ENCODE measurements at regions of chr17 and their contacts with region 1.

Region 1: GRCh38 chr17:29032857-29033197 is 10.1 kb upstream of the PIPOX start:
- DNase-seq: no peak
- H3K4me3 ChIP-seq: peak overlapping the region in 2 of 4 experiments; percentile 32 to 47; a peak in 3 of 8 replicates
- H3K27ac ChIP-seq: peak overlapping the region; percentile 72; the same call in 1 of the 2 replicates
- H3K4me1 ChIP-seq: peaks cover 11 to 31% (median 22%) of the 10 kb centered on the region in 4 experiments
- H3K27me3 ChIP-seq: no peaks in the 10 kb centered on the region
- CTCF ChIP-seq: no peak
- EP300 ChIP-seq: peak in 1 of 2 experiments; percentile 64; a peak in 1 of 3 replicates
- POLR2A ChIP-seq: no peak; a peak in 1 of 3 replicates
- RAD21 ChIP-seq: no peak

Region 2: DNA sequence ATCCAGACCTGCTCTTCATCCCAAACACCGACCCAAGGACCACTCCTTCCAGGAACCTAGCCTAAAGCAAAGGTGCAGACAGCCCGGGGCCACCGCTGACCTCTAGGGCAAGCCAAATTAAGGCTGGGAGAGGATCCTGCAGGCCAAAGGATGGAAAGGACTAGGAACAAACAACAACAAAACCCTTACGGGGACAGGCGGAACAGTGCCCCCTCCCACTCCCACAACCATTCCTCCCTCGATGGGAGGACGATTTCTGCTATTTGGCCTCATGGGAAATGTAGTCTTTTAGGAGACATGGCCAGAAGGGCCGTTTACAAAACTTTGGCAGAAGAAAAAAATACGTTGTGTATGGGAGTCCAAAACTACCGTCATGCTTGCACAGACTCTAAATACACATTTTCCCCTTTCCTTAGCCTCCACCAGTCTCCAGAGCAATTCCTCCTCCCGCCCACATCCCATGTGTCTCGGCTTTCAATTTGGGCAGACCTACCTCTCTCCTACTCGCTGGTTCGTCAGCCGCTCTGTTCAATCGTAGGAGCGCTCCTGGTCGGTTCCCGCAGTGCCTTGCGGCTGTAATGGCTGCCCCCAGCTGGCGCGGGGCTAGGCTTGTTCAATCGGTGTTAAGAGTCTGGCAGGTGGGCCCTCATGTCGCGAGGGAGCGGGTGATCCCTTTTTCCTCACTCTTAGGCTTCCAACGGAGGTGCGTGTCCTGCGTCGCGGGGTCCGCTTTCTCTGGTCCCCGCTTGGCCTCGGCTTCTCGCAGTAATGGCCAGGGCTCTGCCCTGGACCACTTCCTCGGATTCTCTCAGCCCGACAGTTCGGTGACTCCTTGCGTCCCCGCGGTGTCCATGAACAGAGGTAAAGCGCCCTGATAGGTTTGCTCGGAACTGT is 178.1 kb before region 1 on chr17 and contains the start of gene ERAL1:
- CTCF ChIA-PET with region 1: no interaction called
- POLR2A ChIA-PET with region 1: no interaction called
- DNase-seq: peak in 1 of 2 experiments; percentile 90
- H3K4me3 ChIP-seq: peak within 1 kb of the TSS; percentile 78 to 96 (median 93)
- H3K27ac ChIP-seq: peak within 1 kb of the TSS; percentile 75; the same call in 1 of the 2 replicates
- H3K4me1 ChIP-seq: no peaks in the 10 kb centered on the region; a peak in 2 of 7 replicates
- H3K27me3 ChIP-seq: no peaks in the 10 kb centered on the region
- CTCF ChIP-seq: no peak
- EP300 ChIP-seq: no peak
- POLR2A ChIP-seq: peak; percentile 82 to 93
- RAD21 ChIP-seq: no peak
- total RNA-seq, gene ERAL1: 67.8 and 77.1 TPM in 2 replicates

Region 3: DNA sequence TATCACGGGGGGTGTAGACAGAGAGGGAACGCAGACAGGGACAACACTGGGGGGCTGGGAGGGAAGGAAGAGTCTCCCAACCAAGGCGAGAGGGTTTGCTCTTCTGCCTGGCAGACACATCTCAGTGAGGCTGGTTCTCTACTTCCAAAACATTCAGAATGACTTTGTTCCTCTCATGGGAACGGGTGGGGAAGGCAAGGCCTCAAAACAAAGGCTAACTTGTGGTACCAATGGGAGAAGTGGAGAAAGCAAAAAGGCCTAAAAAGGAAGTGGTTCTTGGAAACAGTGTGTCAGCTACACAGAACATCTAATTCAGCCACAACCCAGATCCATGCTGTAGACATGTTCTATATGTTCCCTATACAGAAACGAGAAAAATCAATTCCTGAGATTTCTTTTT is 142.8 kb before region 1 on chr17:
- CTCF ChIA-PET with region 1: no interaction called
- POLR2A ChIA-PET with region 1: no interaction called
- DNase-seq: no peak
- H3K4me3 ChIP-seq: no peak overlapping the region
- H3K27ac ChIP-seq: no peak overlapping the region
- H3K4me1 ChIP-seq: peaks cover 0 to 3% (median under 1%) of the 10 kb centered on the region in 4 experiments; a peak in 2 of 7 replicates
- H3K27me3 ChIP-seq: no peaks in the 10 kb centered on the region
- CTCF ChIP-seq: no peak
- EP300 ChIP-seq: no peak
- POLR2A ChIP-seq: no peak
- RAD21 ChIP-seq: no peak

Region 4: GRCh38 chr17:28937044-28937729 is 95.6 kb before region 1 on chr17:
- CTCF ChIA-PET with region 1: no interaction called
- POLR2A ChIA-PET with region 1: no interaction called
- DNase-seq: no peak
- H3K4me3 ChIP-seq: no peak overlapping the region
- H3K27ac ChIP-seq: no peak overlapping the region
- H3K4me1 ChIP-seq: peaks cover 2 to 22% (median 16%) of the 10 kb centered on the region in 4 experiments; a peak in 5 of 7 replicates
- H3K27me3 ChIP-seq: no peaks in the 10 kb centered on the region
- CTCF ChIP-seq: no peak
- EP300 ChIP-seq: no peak
- POLR2A ChIP-seq: no peak
- RAD21 ChIP-seq: no peak

Region 5: DNA sequence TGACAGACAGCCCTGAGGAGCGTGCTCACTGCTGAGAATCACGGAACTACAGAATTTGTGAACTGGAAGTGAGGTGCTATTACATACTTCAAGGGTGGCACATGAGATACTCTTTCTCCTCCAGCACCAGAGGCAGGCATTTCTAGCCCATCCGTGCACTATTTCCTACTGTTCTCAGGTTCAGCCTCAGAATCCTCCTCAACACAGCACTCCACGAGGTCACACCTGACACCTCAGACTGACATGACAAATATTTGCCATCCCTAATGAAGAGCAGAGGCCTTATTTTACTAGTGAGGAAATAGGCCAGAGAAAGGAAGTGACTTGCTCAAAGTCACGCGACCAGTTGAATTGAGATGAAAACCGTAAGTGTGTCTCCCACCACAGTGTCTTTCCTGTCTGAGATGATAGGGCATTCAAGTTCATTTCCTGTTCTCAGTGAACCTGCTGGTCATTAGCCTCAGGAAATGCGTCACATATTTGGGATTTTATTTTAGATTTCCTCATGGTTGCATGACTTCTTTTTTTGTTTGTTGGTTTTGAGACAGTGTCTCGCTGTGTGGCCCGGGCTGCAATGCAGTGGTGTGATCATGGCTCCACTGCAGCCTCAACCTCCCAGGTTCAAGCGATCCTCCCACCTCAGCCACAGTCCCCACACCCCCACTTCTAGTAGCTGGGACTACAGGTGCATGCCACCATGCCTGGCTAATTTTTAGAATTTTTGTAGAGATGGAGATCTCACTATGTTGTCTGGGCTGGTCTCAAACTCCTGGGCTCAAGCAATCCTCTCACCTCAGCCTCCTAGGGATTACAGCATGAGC is 50.5 kb before region 1 on chr17:
- CTCF ChIA-PET with region 1: no interaction called
- POLR2A ChIA-PET with region 1: interaction called, 14 read pairs
- DNase-seq: no peak
- H3K4me3 ChIP-seq: no peak overlapping the region
- H3K27ac ChIP-seq: no peak overlapping the region
- H3K4me1 ChIP-seq: peaks cover 14 to 18% (median 16%) of the 10 kb centered on the region in 4 experiments
- H3K27me3 ChIP-seq: no peaks in the 10 kb centered on the region
- CTCF ChIP-seq: no peak
- EP300 ChIP-seq: no peak
- POLR2A ChIP-seq: no peak
- RAD21 ChIP-seq: no peak

Region 6: DNA sequence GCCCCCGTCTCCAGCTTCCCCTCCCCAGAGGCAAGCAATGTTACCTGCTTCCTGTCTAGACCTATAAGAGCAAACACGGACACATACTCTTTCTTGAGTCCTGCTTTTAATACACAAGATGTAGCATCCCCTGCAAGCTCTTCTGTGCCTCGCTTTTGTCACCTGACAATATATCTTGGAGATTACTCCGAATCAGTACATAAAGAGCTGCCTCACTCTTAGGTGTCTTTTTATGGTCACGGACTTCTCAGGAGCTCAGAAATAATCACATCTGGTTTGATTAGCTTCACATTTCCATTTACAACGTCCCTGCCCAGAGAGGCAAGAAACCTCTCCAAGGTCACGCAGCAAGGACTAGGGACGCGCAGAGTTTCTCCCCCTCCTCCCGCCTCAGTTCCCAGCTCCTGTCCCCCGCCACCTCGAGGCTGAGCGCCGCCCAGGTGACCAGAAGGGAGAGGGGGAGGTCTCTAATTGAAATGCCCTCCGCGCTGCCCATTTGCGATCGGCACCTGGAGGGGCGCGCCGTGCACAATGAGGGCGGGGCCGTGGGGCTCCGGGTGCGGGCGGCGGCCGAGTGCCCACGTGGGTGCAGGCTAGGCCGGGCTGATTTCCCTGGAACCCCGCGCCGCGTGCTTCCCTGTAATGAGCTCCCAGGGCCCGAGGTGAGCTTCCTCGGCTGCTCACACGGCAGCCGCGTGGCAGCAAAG is 13.2 kb before region 1 on chr17:
- CTCF ChIA-PET with region 1: interaction called, 13 read pairs
- POLR2A ChIA-PET with region 1: interaction called, 47 read pairs
- DNase-seq: peak in 1 of 2 experiments; percentile 72
- H3K4me3 ChIP-seq: peak overlapping the region in 2 of 4 experiments; percentile 23 to 45; a peak in 4 of 8 replicates
- H3K27ac ChIP-seq: no peak overlapping the region
- H3K4me1 ChIP-seq: peaks cover 20 to 37% (median 32%) of the 10 kb centered on the region in 4 experiments
- H3K27me3 ChIP-seq: peaks cover 0 to 3% (median 0%) of the 10 kb centered on the region in 4 experiments; a peak in 3 of 7 replicates
- CTCF ChIP-seq: no peak
- EP300 ChIP-seq: no peak
- POLR2A ChIP-seq: no peak
- RAD21 ChIP-seq: no peak

Region 7: DNA sequence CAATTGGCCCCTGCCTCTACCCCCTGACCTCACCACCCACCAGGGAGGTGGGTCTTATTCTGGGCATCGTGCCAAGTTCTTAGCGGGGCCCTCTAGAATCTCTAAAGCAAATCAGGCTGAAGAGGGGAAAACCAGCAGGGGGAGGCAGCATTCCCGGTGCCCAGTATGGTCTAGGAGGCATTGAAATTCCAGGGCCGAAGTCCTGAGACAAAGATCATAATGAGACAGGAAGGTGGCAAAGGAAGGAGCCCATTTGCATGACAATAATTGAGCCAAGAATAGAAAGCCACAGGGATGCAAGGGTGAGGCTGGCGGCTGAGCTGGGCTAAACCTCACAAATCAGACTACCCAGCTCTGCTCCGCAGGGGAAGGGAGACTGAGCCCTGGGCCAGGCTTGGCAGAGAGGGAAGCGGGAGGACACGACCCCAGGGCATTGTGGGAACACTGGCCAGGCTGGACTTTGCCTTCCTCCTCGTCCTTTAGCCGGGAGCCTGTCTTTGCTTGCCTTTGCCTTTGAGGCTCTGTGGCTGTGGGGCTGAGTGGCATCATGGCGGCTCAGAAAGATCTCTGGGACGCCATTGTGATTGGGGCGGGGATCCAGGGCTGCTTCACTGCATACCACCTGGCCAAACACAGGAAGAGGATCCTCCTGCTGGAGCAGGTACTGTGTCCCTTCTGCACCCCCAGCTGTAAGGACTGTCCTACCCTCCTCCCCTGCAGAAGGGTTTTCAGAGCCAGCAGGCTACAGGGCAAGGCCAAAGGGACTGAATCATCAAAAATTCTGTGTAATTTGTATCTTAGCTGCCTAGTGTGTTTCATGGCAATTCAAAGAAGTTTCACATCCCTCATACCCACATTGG is 10.1 kb after region 1 on chr17 and contains the start of gene PIPOX:
- CTCF ChIA-PET with region 1: interaction called, 6 read pairs
- POLR2A ChIA-PET with region 1: interaction called, 43 read pairs
- DNase-seq: peak; percentile 81 to 94
- H3K4me3 ChIP-seq: peak within 1 kb of the TSS in 3 of 4 experiments; percentile 0 to 25 (median 15); a peak in 3 of 8 replicates
- H3K27ac ChIP-seq: peak within 1 kb of the TSS; percentile 92
- H3K4me1 ChIP-seq: peaks cover 14 to 27% (median 20%) of the 10 kb centered on the region in 4 experiments
- H3K27me3 ChIP-seq: no peaks in the 10 kb centered on the region
- CTCF ChIP-seq: peak; percentile 26 to 54 (median 45)
- EP300 ChIP-seq: peak in 1 of 2 experiments; percentile 85; a peak in 1 of 3 replicates
- POLR2A ChIP-seq: peak; percentile 60 to 89
- RAD21 ChIP-seq: peak in 1 of 2 experiments; percentile 63; a peak in 2 of 4 replicates
- total RNA-seq, gene PIPOX: 55.5 and 57.2 TPM in 2 replicates

Measured in H1 (cell line).